ENCODE measurements at regions of chr9 and their contacts with region 1.

Region 1: DNA sequence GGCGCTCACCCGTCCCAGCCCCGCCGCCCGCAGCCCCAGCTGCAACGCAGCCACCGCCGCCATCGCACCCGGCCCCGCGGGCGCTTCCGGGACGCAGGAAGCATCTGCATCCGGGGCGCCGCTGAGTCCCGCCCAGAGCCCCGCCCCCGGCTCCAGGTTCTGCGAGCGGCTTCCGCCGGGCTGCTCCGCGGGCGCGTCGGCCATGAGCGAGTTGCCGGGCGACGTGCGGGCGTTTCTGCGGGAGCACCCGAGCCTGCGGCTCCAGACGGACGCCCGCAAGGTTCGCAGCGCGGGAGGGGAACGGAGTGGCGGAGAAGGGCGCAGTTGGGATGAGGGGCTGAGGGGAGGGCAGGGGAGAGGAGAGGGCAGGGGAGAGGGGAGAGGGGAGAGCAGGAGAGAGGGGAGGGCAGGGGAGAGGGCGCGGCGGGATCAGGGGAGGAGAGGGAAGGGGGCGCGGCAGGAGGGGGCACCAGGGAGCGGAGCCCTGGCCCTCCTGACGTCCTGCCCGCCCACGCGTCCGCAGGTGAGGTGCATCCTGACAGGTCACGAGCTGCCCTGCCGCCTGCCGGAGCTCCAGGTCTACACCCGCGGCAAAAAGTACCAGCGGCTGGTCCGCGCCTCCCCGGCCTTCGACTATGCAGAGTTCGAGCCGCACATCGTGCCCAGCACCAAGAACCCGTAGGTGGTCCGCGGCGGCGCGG is at the starts of genes SURF1 and SURF2:
- DNase-seq: peak; percentile 62 to 95 (median 90)

Region 2: DNA sequence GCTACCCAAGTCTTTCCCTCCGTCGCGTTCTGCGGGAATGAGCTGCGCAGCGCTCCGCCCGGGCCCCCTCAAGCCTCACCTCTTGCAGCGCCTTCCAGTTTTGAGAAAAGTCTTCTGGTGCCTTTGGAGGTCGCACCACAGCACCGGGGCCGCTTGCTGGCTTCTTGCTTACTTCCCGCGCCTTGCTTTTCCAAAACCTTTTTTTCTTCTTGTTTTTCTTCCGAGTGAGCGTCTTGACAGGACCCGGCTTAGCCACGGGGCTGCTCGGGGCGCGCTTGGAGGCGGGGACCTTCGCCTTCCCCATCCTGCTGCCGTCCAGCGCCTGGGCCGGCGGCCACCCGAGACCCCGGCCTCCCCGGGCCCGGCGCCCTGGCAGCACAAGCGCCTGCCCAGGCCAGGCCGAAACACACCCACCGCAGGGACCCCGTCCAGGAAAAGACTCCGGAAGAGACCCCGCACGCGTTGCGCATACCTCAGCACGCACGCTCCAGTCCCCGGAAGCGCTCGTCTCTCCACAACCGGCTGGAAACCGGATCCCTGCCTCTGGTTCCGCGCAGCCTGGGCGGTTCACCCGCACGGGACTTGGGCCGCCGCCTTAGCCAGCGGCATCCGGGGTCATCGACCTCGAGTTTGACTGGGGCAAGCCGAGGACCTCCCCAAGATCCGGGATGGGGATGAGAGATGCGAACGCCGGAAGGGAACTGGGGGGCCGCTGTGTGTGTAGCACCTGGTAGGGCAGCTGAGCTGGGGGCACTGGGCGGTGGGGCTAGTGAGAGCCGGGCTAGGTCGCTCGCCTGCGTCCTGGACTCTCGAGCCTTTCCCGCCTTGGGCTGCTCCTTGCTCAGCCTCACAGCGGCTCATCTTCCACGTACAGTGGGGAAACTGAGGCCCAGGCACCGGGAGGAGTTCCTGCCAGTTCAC is 61.3 kb after region 1 on chr9 and contains the start of gene REXO4:
- intact Hi-C with region 1: loop called (anchors 10 kb)
- DNase-seq: peak; percentile 59 to 93 (median 82)

Region 3: DNA sequence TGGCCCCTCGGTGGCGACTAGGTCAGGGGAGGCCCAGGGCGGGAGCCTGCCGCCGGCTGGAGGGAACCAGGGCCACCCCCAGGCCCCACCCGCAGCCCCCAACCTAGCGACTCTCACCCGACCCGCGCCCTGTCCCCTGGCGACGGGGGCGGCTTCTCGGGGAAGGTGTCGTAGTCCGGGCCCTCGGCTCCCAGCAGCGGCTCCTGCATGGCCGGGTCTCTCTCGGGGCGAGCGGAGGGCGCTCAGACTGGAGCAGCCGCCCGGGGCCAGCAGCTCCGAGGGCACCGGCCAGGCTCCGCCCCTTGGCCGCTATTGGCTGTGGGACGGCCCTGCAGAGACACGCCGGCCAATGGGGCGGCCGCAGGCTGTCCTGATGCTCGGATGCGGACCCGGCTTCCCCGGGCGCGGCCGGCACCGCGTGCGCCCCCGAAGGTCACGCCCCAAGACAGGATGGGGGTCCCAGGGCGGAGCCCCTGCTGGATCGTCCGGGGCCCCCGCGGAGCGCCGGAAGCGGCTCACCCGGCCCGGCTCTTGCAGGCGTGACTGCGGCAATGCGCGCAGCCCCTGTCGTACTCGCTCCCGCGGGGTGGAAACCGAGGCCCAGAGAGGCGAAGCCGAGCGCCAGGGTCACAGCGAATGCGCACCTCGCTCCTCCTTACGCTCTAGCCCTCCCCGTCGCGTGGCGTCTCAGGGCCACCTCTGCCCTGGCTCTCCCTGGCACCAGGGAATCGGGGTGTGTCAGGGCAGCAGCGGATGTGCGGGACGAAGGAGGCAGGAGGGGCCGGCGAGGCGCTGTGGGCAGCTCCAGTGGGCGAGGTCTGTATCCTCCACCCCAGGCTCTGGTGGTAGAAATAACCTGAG is 122.5 kb after region 1 on chr9 and contains the start of gene SLC2A6:
- intact Hi-C with region 1: loop called (anchors 10 kb)
- DNase-seq: peak; percentile 80 to 97 (median 93)